Left cardiac atrium (tissue), 4 donors: ENCODE measurements at regions of chr4 and their contacts with region 1.

Region 1: GRCh38 chr4:931960-932712 is at the starts of genes GAK and TMEM175:
- DNase-seq: peak; percentile 97
- ATAC-seq: peak; percentile 99 to 100
- total RNA-seq, gene GAK: 38.1 to 43.2 TPM
- total RNA-seq, gene TMEM175: 17.9 to 20.7 TPM

Region 2: GRCh38 chr4:602559-602942 is 329.6 kb before region 1 on chr4:
- intact Hi-C with region 1: no loop called
- DNase-seq: no peak
- ATAC-seq: peak in 1 of 2 donors; percentile 32

Region 3: DNA sequence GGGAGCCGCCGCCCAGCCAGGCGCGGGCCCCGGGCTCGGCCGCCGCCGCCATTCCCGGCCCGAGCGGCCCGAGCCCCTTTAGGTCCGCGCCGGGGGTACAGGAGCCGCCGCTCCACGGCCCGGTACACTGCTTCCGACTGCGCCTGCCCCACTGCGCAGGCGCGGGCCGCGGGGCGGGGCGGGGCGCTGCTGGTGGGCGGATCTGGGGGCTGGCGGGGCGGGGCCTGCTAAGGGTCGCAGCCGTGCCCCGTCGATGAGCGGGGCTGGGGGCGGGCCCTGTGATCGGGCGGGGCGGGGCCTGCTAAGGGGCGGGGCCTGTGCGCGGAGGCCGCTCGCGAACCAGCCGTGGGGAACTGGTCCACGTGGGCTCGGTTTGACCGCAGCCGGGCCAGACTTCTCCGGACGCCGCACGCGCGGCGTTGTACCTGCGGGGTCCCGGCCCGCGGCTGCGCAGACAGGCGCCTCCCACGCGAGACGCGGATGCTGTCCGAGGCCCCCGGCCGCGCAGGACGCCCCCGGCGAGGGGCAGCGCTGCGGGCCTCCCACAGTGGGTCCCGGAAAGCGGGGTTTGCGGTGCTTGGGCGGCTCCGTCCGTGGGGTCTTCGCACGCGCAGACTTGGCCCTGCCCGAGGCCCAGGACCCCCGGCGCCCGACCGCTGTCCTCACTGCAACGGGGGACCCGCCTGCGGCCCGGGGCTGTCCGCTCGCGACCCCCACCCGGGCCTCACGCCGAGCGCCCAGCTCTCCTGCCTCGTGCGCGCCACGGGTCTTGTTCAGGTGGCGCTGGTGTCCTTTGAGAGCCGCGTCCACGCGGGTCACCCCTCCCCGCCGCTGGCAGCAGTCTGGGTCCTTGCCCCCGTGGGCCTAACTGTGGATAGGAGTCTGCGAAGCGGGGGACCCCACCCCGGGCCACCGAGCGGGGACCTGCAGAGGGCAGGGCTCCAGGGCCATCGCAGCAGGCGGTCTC is 41.6 kb after region 1 on chr4 and contains the start of gene DGKQ:
- intact Hi-C with region 1: loop called in 1 of 2 experiments (anchors 5 kb)
- DNase-seq: peak; percentile 90
- ATAC-seq: peak; percentile 97 to 99
- total RNA-seq, gene DGKQ: 5.1 to 5.6 TPM